Left colon (tissue), 2 donors: ENCODE measurements at regions of chr14 and their contacts with region 1.

Region 1: GRCh38 chr14:30214461-30215090 is 286.9 kb upstream of the PRKD1 start:
- DNase-seq: no peak
- ATAC-seq: no peak

Region 2: DNA sequence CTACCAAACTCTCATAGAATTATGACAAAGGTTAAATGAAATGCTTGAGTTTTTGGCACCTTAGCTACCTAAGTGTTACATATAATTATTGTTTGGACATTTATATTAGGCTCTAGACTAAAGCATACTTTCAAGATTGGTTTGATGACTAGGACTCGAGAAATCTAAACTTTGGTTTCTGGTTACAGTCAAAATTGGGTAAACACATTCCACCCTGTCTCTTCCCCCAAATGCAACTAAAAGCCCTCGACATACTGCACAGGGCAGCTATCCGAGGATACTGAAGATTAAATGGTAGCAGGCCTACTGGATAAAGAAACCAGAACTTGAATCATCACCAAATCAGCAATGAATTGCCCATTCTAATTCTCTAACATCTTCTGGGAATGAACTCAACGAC is 656.1 kb before region 1 on chr14:
- intact Hi-C with region 1: loop called in 1 of 2 experiments (anchors 10 kb)
- DNase-seq: no peak
- ATAC-seq: no peak

Region 3: DNA sequence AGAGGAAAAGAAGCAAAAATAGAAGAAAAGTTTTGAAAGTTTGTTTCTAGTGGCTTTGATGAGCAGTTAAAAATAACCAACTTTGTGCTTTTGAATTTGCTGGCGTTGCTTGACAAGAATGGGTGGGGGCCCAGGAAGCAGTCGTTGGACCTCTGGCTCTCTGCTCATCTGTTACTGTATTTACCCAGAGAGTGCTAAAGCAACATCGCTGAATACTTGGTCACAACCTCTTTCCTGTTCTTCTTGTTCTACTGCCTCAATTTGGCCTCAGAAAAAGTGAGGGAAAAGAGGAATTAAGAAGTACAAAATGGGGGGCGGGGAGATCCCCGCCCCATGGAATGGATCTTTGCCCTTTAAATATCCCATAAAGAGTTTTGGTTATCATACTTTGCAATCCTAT is 122.9 kb after region 1 on chr14:
- intact Hi-C with region 1: no loop called
- DNase-seq: no peak
- ATAC-seq: no peak